Ascending aorta (tissue), 2 donors: ENCODE measurements at regions of chr1 and their contacts with region 1.

Region 1: GRCh38 chr1:32063261-32063681 is 9.5 kb upstream of the TMEM39B start:
- DNase-seq: no peak
- H3K4me3 ChIP-seq: no peak overlapping the region
- H3K27ac ChIP-seq: peak overlapping the region; percentile 70 to 91
- H3K4me1 ChIP-seq: peaks cover 3 to 35% of the 10 kb centered on the region in 2 donors
- H3K27me3 ChIP-seq: no peaks in the 10 kb centered on the region
- CTCF ChIP-seq: peak; percentile 49 to 65 (median 65)

Region 2: GRCh38 chr1:31587720-31588394 is 475.4 kb before region 1 on chr1:
- intact Hi-C with region 1: loop called (anchors 10 kb)
- DNase-seq: peak; percentile 70 to 94
- H3K4me3 ChIP-seq: peak overlapping the region; percentile 46 to 56
- H3K27ac ChIP-seq: peak overlapping the region; percentile 93 to 97
- H3K4me1 ChIP-seq: peaks cover 45 to 77% of the 10 kb centered on the region in 2 donors
- H3K27me3 ChIP-seq: no peaks in the 10 kb centered on the region
- CTCF ChIP-seq: peak; percentile 28 to 69 (median 65)

Region 3: DNA sequence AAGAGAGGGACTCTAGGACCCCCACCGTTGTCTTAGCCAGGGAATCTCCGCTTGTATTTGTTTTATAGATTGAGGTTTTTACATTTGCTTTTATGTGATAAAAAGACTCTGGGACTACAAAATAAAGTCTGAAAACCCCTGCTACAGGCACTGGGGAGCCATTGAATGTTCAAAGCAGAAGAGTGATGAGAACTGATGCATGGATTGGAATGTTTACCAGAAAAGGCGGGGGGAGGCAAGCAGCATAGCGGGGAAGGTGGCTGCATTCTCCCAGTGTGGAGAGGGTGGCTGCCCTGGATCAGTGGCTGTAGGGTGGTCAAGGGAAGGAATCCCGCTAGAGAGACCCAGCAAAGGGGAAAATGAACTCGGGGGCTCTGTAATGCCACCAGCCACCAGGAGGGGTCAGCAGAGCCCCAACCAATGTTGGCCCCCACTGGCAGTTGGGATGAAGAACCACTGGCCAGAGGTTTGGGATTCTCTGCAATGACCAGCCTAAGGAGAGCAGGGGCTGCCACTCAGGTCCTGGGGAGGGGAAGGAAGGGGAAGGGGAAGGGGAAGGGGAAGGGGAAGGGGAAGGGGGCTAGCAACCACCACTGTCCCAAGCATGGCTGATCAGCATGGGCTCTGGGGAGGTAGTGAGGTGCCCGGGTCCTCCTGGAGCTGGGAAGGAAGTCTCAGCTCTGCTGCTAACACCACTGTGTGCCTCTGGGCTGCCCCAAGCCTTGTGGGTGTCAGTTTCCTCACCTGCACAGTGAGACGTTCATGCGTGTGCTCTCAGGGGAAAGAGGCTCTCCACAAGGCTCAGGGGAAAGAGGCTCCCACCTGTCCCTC is 399.4 kb before region 1 on chr1:
- intact Hi-C with region 1: loop called (anchors 10 kb)
- DNase-seq: peak in 1 of 2 donors; percentile 81
- H3K4me3 ChIP-seq: no peak overlapping the region
- H3K27ac ChIP-seq: no peak overlapping the region
- H3K4me1 ChIP-seq: peaks cover 0 to 3% of the 10 kb centered on the region in 2 donors
- H3K27me3 ChIP-seq: no peaks in the 10 kb centered on the region
- CTCF ChIP-seq: peak; percentile 89 to 98 (median 90)

Region 4: DNA sequence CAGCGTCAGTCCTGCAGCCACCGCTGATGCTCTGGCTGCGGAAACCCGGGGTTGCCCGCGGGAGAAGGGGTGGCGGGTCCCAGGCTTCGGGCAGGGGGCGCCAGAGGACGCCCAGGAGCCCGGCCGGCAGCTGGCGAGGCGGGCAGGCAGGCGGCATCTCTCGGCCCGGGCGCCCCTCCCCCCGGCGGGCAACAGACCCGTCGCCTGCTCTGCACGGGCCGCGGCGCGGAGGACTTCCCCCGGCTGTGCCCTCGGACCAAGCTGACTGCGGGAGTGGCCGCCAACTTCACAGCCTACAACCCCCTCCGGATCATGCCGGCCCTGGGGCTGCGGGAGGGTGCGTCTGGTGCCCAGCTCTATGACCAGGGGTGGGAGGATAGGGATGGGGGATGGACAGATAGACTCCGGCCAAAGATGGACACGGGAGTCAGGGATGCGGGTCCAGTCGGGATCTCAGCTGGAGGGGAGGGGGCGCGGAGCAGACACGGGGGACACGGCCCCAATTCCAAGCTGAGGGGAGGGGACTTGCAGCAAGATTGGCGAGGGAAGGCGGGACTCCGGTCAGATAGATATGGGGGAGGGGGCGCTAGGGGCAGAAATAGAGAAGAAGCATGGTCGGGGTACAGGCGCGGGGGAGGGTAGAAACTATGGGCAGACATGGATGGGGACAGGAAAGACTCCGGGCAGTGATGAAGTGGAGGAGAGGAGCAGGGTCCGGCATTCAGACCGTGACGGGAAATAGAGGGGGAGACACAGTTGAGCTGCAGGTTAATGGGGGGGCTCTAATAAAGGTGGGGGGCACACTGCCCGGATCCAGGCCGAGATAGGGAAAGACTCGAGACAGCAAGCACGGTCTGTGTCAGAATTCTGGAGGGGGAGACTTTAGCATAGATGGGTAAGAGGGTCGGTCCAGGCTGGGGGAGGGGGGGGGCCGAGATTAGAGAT is 300.3 kb before region 1 on chr1:
- intact Hi-C with region 1: loop called (anchors 5 kb)
- DNase-seq: peak in 1 of 2 donors; percentile 82
- H3K4me3 ChIP-seq: peak overlapping the region; percentile 63 to 86
- H3K27ac ChIP-seq: no peak overlapping the region
- H3K4me1 ChIP-seq: peaks cover 10 to 31% of the 10 kb centered on the region in 2 donors
- H3K27me3 ChIP-seq: no peaks in the 10 kb centered on the region
- CTCF ChIP-seq: peak; percentile 62 to 73 (median 68)

Region 5: DNA sequence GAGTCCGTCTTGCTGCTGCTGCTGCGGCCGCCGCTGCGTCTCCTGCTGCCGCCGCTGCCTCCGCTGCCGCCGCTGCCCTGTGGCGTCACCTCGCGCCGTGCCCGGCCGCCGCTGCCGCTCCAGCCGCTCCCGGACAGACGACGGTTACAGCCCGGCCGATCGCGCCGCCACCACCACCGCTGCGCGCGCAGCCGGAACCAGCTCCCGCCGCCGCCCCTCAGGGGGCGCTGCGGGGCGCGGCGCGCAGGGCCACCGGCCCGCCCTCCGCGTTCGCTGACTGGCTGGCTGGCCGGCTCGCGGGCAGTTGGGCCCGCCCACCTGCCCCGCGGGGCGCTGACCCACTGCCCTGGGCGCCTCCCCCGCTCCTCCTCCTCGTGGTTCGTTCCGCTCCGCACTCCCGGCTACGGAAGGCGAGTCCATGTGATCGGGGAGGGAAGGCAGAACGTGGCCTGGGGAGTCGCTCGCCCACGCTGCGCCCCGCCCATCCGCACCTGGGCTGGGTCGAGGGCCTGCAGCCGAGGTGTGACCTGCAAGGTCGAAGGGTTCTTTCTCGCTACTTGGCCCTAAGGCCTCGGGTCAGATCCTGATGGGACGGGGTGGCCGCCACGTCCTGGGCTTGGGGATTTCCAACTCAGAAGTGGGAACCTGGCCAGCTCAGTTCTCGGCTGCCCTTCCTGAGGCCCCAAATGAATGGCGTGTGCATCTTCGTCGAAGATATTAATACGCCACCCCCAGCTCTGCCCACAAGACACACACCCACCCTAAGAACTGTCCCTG is 124.9 kb before region 1 on chr1 and contains the start of gene PTP4A2:
- intact Hi-C with region 1: loop called (anchors 5 kb)
- DNase-seq: peak; percentile 77 to 95
- H3K4me3 ChIP-seq: peak within 1 kb of the TSS; percentile 70 to 85
- H3K27ac ChIP-seq: peak within 1 kb of the TSS; percentile 94 to 97
- H3K4me1 ChIP-seq: peaks cover 12 to 26% of the 10 kb centered on the region in 2 donors
- H3K27me3 ChIP-seq: no peaks in the 10 kb centered on the region
- CTCF ChIP-seq: peak in 1 of 3 experiments; percentile 98
- total RNA-seq, gene PTP4A2: 174 TPM

Region 6: DNA sequence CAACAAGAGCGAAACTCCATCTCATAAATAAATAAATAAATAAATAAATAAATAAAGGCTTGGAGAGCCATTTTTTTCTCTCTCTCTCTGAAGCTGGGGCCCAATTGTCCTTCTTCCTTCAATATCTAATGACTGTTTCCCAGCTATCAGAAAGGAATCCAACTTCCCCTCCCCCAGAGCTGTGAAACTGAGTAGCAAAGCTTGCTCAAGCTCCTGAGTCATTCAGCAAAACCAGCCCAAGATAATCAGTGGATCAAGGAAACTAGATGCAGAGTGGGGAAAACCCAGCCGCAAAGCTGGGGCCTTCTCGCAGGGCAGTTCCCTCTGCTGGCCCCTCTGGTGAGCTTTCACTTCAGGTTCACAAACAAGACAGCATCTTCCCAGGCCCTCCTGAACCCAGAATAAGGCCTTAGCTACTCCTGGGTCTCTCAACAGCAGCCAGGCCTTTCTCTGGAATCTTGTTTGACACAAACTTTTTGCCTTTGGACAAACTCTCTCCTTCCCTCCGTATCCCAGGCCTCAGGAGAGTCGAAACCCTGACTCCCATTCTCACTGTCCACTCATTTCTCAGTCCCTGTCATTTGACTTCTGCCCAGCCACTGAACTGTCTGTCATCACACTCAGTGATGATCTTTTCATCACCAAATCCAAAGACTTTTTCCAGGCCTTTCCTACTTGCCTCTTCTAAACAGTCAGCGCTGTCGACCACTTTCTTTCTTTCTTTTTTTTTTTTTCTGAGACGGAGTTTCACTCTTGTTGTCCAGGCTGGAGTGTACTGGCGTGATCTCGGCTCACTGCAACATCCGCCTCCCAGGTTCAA is 107.1 kb before region 1 on chr1:
- intact Hi-C with region 1: loop called (anchors 5 kb)
- DNase-seq: peak; percentile 77 to 95
- H3K4me3 ChIP-seq: peak overlapping the region in 1 of 2 donors; percentile 26
- H3K27ac ChIP-seq: peak overlapping the region; percentile 85 to 90
- H3K4me1 ChIP-seq: peaks cover 23 to 34% of the 10 kb centered on the region in 2 donors
- H3K27me3 ChIP-seq: no peaks in the 10 kb centered on the region
- CTCF ChIP-seq: peak; percentile 19 to 52 (median 39)

Region 7: GRCh38 chr1:32013386-32014198 is 49.7 kb before region 1 on chr1 and contains the start of gene KHDRBS1:
- intact Hi-C with region 1: loop called (anchors 1 kb)
- DNase-seq: peak; percentile 95 to 100
- H3K4me3 ChIP-seq: peak within 1 kb of the TSS; percentile 96 to 99
- H3K27ac ChIP-seq: peak within 1 kb of the TSS; percentile 98 to 100
- H3K4me1 ChIP-seq: peaks cover 9 to 23% of the 10 kb centered on the region in 2 donors
- H3K27me3 ChIP-seq: no peaks in the 10 kb centered on the region
- CTCF ChIP-seq: no peak
- total RNA-seq, gene KHDRBS1: 120 TPM

Region 8: DNA sequence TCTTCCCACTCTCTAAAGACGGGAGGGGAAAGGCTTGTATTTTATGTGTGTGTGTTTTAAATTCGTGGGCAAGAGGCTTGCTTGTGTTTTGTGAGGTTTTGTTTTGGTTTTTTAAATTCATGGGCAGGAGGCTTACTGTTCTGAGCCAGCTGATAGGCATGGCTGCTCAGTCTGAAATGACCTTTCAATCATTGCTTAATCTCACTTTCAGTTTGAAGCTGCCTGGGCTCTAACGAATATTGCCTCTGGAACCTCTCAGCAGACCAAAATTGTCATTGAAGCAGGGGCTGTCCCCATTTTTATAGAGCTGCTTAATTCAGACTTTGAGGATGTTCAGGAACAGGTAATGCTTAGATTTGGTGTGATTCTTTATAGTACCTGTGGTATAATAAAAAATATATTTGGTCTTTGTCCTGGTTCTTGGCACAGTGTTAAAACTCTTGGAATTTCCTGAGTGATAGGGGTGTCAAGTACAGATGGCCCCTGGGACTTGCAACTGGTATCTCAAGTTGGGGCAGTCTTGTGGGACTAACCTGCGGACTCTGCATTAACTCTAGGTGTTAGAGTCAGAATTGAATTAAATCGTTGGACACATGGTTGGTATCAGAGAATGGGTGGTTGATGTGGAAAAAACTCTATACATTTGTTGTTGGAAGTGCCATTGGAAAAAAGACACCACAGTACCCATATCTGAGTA is 96.1 kb after region 1 on chr1:
- intact Hi-C with region 1: no loop called
- DNase-seq: no peak
- H3K4me3 ChIP-seq: no peak overlapping the region
- H3K27ac ChIP-seq: no peak overlapping the region
- H3K4me1 ChIP-seq: no peaks in the 10 kb centered on the region
- H3K27me3 ChIP-seq: no peaks in the 10 kb centered on the region
- CTCF ChIP-seq: no peak